Activated naive CD4-positive, alpha-beta T cell treated with anti-CD3 and anti-CD28 coated beads for 36 hours (primary cell): ENCODE measurements at regions of chr14 and their contacts with region 1.

Region 1: GRCh38 chr14:69611201-69612011 is at the start of gene SUSD6:
- DNase-seq: peak; percentile 88
- H3K4me3 Mint-ChIP-seq: peak within 1 kb of the TSS; percentile 92
- H3K27ac Mint-ChIP-seq: peak within 1 kb of the TSS; percentile 91
- H3K4me1 Mint-ChIP-seq: peaks cover 53% of the 10 kb centered on the region
- H3K27me3 Mint-ChIP-seq: no peaks in the 10 kb centered on the region
- total RNA-seq, gene SUSD6: 66.6 to 69.7 TPM

Region 2: DNA sequence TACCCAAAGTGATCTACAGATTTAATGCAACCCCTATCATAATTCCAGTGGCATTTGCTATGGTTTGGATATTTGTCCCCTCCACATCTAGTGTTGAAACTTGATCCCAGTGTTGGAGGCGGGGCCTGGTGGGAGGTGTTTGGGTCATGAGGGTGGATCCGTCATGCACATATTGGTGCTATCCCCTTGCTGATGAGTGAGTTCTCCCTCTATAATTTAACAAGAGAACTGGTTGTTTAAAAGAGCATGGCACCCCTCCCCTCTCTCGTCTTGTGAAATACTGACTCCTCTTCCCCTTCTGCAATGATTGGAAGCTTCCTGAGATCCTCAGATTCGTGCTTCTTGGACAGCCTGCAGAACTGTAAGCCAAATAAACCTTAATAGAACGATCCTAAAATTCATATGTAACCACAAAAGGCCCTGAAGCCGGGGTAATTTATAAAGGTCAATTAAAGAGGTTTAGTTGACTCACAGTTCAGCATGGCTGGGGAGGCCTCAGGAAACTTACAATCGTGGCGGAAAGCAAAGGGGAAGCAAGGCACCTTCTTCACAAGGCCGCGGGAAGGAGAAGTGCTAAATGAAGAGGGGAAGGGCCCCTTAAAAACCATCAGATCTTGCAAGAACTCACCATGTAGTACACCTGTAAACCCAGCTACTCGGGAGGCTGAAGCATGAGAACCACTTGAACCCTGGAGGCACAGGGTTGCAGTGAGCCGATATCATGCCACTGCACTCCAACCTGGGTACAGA is 171.7 kb before region 1 on chr14:
- CTCF ChIA-PET with region 1: no interaction called
- intact Hi-C with region 1: no loop called
- DNase-seq: no peak
- H3K4me3 Mint-ChIP-seq: no peak overlapping the region
- H3K27ac Mint-ChIP-seq: no peak overlapping the region
- H3K4me1 Mint-ChIP-seq: peaks cover 18% of the 10 kb centered on the region
- H3K27me3 Mint-ChIP-seq: no peaks in the 10 kb centered on the region

Region 3: DNA sequence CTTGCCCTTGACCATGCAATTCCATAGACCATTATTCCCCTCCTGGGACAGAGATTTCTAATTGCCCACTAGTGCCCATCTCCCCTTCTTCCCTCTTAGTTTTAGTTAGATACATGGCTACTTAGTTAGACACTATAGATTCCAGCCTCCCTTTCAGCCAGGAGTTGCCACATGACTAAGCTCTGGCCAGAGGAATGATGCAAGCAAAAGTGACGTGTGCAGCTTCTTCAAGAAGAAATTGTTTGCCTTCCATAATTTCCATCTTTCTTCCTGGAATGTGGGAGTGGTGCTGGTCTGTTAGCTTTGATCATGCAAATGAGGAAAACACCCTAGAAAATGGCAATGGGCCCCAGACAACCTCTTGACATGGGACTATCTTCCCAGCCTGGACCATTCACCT is 58.2 kb before region 1 on chr14:
- CTCF ChIA-PET with region 1: no interaction called
- intact Hi-C with region 1: no loop called
- DNase-seq: no peak
- H3K4me3 Mint-ChIP-seq: no peak overlapping the region
- H3K27ac Mint-ChIP-seq: no peak overlapping the region
- H3K4me1 Mint-ChIP-seq: peaks cover under 1% of the 10 kb centered on the region
- H3K27me3 Mint-ChIP-seq: peaks cover 17% of the 10 kb centered on the region

Region 4: DNA sequence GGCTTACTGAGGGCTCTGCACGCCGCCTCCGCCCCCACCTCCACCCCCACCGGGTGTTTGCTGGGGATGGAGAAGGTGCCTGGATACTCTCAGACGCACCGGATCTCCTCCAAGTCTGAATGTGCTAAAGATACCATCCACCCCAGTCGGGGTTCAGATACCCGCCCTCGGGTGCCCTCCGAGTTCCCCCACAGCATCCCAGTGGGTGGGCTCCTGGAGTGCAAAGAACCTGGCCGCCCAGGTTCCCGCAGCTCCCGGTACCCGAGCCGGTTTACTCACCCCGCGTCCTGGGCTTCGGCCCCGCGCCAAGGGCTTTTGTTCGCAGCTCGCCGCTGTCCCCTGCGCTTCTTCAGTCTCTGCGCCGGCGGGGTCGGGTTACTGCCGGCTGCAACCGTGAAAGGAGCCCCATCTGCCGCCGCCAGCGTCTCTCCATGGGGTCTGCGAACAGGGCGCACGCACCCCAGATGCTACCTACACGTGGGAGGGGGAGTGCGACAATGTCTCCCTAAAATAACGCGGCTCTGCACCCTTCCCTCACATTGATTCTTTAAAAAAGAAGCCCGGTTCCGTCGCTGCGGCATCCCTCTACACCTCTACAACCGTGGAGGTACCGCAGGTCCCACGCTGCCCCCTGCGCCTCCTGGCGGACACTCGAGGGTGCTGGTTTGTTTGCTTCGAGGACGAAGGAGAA is 37.0 kb before region 1 on chr14 and contains the start of gene CCDC177:
- CTCF ChIA-PET with region 1: no interaction called
- intact Hi-C with region 1: no loop called
- DNase-seq: peak; percentile 81
- H3K4me3 Mint-ChIP-seq: peak within 1 kb of the TSS; percentile 68
- H3K27ac Mint-ChIP-seq: no peak within 1 kb of the TSS
- H3K4me1 Mint-ChIP-seq: peaks cover 10% of the 10 kb centered on the region
- H3K27me3 Mint-ChIP-seq: peaks cover 43% of the 10 kb centered on the region
- total RNA-seq, gene CCDC177: not detected

Region 5: DNA sequence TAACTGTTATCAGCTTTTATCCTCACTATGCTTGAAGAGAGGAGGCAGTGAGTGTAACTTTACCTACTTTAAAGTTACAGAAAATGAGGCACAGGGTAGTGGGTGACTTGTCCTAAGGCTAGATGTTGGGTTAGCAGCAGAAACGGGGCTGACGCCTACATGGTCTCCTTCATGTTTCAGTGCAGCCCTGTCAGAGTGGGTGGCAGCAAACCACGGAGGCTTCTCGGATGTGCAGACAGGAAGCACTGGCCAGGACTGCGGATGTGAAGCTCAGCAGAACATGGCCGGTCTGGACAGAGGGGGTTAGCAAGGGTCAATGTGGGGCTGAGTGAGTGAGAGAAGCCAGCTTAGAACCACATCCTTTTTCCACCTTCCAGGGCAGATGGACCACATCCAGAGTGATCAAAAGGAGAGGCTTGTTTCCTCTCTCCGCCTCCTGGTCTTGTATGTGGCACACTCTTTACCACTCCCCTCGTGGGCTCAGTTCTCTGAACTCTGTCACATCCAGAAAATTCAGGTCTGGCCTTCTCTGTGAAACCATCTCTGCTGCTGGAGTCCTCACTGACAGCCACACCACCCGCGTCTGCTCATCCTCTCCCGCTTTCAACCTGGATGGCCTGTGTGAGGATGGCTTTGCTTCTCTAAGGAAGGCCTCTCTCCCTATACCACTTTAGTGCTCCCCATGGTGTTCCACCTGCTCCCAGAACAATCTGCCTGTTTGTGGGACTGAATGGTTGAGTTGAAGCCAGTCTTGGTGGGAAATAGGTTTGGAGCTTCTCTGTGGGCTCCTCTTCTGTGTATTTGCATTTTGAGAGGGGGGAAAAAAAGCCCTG is 14.1 kb after region 1 on chr14:
- CTCF ChIA-PET with region 1: interaction called, 5 read pairs
- intact Hi-C with region 1: loop called (anchors 1 kb)
- DNase-seq: peak; percentile 84
- H3K4me3 Mint-ChIP-seq: peak overlapping the region; percentile 54
- H3K27ac Mint-ChIP-seq: peak overlapping the region; percentile 89
- H3K4me1 Mint-ChIP-seq: peaks cover 93% of the 10 kb centered on the region
- H3K27me3 Mint-ChIP-seq: no peaks in the 10 kb centered on the region

Region 6: DNA sequence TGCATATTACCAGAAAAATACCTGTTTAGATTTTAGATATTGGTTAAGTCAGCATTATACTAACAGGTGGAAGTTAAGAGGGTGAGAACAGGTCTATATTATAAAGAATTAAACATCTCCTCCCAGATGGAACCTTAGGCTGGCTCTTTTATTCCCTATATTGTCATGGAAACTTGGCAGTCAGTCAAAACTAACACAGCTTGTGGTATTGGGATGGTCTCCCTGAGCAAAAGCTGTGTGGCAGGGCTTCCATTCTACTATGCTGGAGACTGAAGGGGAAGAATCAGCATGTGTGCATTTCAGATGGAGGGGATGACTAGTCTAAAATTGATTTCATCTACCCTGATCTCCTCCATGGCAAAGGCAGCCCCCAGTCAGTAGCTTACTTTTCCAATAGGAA is 334.5 kb after region 1 on chr14:
- CTCF ChIA-PET with region 1: no interaction called
- intact Hi-C with region 1: no loop called
- DNase-seq: no peak
- H3K4me3 Mint-ChIP-seq: no peak overlapping the region
- H3K27ac Mint-ChIP-seq: no peak overlapping the region
- H3K4me1 Mint-ChIP-seq: no peaks in the 10 kb centered on the region
- H3K27me3 Mint-ChIP-seq: peaks cover 4% of the 10 kb centered on the region

Region 7: GRCh38 chr14:70655110-70655826 is 1043.9 kb after region 1 on chr14:
- CTCF ChIA-PET with region 1: no interaction called
- intact Hi-C with region 1: loop called (anchors 10 kb)
- DNase-seq: peak; percentile 92
- H3K4me3 Mint-ChIP-seq: peak overlapping the region; percentile 83
- H3K27ac Mint-ChIP-seq: peak overlapping the region; percentile 98
- H3K4me1 Mint-ChIP-seq: peaks cover 81% of the 10 kb centered on the region
- H3K27me3 Mint-ChIP-seq: no peaks in the 10 kb centered on the region